Activated T-helper 1 cell treated with anti-CD3 and anti-CD28 coated beads, Interleukin-12 subunit alpha, Interleukin-12 subunit beta, Interleukin-2, Interleukin-4 antibody, amounts not matched to agents 30 ng/mL and 10 ng/mL and 1 ng/mL, durations not matched to agents 14 hours and 24 hours and 36 hours (primary cell): ENCODE measurements at regions of chr16 and their contacts with region 1.

Region 1: GRCh38 chr16:53892155-53892554 is 188.2 kb downstream of the FTO start:
- DNase-seq: peak; percentile 39
- H3K4me3 Mint-ChIP-seq: no peak overlapping the region
- H3K27ac Mint-ChIP-seq: peak overlapping the region; percentile 11
- H3K4me1 Mint-ChIP-seq: peaks cover 38% of the 10 kb centered on the region
- H3K27me3 Mint-ChIP-seq: no peaks in the 10 kb centered on the region

Region 2: DNA sequence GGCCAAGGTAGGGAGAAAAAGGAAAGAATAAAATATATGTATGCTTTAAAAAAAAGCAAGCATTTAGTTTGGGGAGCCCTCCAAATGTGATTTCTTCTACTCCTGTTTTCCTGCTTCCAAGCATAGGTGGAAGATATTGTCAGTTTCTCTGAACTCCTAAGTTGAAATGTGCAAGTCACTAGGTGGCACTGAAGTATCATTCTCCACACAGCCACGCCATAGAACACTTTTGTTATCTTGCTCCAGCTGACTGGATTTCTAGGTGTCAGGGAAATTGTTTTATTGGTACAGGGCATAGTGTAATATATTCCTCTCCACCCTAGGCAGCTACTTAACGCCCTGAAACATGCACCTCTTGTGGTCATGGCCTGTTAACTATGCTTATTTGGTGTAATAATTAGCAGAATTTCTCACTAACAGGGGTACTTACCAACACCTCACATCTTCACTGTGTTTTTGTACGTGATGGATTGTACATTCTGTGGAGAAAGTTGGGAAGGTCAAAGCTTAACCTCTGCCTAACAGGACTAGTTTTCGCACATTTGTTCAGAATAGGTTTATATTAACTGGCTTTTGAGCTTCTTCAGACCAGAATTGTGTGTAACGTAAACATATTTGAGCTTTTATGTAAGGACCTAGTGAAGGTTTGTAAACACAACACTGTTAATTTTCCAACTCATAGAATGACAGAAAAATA is 118.9 kb before region 1 on chr16:
- intact Hi-C with region 1: loop called (anchors 2 kb)
- DNase-seq: no peak
- H3K4me3 Mint-ChIP-seq: no peak overlapping the region
- H3K27ac Mint-ChIP-seq: no peak overlapping the region
- H3K4me1 Mint-ChIP-seq: peaks cover 27% of the 10 kb centered on the region
- H3K27me3 Mint-ChIP-seq: no peaks in the 10 kb centered on the region

Region 3: DNA sequence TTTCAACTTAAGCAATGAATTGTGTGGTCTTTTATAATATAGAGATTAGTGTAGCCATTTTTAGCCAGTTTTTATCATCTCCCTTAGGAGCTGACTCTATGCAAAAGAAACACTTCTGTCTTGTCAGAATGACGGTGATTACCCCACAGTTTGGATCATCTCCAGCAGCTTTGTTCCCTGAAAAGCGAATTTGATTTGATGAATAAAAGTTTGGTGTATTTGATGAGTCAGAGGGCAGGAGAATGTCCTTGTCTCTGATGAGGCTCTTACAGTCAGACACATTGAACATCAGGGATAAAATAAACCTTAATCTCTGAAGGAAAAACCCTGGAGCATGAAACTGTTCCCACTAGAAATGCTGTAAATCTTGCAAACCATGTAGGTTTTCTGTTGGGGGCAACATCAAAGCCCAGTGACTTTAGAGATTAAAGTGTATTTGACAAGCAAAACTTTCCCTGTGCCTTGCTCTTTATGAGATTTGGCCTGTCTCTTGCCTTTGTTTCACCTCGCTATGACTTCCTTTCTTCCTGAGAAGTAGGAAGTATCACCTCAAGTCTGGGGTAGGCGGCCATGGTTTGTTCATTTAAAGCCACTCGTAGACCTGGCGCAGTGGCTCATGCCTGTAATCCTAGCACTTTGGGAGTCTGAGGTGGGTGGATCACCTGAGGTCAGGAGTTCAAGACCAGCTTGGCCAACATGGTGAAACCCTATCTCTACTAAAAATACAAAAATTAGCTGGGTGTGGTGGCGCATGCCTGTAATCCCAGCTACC is 21.1 kb after region 1 on chr16:
- intact Hi-C with region 1: loop called (anchors 2 kb)
- DNase-seq: peak; percentile 4
- H3K4me3 Mint-ChIP-seq: peak overlapping the region; percentile 46
- H3K27ac Mint-ChIP-seq: peak overlapping the region; percentile 82
- H3K4me1 Mint-ChIP-seq: peaks cover 8% of the 10 kb centered on the region
- H3K27me3 Mint-ChIP-seq: no peaks in the 10 kb centered on the region

Region 4: GRCh38 chr16:53945996-53946395 is 53.8 kb after region 1 on chr16:
- intact Hi-C with region 1: loop called (anchors 1 kb)
- DNase-seq: no peak
- H3K4me3 Mint-ChIP-seq: no peak overlapping the region
- H3K27ac Mint-ChIP-seq: no peak overlapping the region
- H3K4me1 Mint-ChIP-seq: peaks cover 43% of the 10 kb centered on the region
- H3K27me3 Mint-ChIP-seq: no peaks in the 10 kb centered on the region

Region 5: DNA sequence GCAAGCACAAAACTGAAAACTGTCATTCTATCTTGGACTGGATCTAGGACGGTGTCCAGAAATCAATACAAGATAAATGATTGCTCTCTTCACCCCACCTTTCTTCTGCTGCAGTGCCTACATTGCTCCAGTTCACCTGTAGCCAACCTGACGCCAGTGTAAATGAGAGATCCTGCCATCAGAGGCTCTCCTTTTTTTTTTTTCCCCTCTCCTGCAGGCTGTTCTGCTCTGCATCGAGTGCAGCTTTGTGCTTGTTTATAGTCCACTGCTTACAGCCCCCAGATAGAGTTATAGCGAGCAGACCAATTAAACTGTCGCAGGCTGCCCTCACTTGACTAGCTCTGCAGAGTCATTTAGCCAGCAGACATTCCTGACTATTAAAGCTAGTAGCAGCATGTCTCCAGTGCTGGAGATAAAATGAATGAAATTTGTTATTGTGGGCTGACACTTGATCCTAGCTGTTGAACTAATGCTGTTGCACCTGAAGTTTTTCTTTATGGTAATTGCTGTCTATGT is 68.9 kb after region 1 on chr16:
- intact Hi-C with region 1: no loop called
- DNase-seq: no peak
- H3K4me3 Mint-ChIP-seq: no peak overlapping the region
- H3K27ac Mint-ChIP-seq: peak overlapping the region; percentile 26
- H3K4me1 Mint-ChIP-seq: peaks cover 20% of the 10 kb centered on the region
- H3K27me3 Mint-ChIP-seq: no peaks in the 10 kb centered on the region

Region 6: GRCh38 chr16:54006693-54007092 is 114.5 kb after region 1 on chr16:
- intact Hi-C with region 1: no loop called
- DNase-seq: no peak
- H3K4me3 Mint-ChIP-seq: no peak overlapping the region
- H3K27ac Mint-ChIP-seq: no peak overlapping the region
- H3K4me1 Mint-ChIP-seq: no peaks in the 10 kb centered on the region
- H3K27me3 Mint-ChIP-seq: no peaks in the 10 kb centered on the region

Region 7: GRCh38 chr16:54422569-54422978 is 530.4 kb after region 1 on chr16:
- intact Hi-C with region 1: loop called (anchors 10 kb)
- DNase-seq: no peak
- H3K4me3 Mint-ChIP-seq: no peak overlapping the region
- H3K27ac Mint-ChIP-seq: no peak overlapping the region
- H3K4me1 Mint-ChIP-seq: no peaks in the 10 kb centered on the region
- H3K27me3 Mint-ChIP-seq: peaks cover 2% of the 10 kb centered on the region

Region 8: DNA sequence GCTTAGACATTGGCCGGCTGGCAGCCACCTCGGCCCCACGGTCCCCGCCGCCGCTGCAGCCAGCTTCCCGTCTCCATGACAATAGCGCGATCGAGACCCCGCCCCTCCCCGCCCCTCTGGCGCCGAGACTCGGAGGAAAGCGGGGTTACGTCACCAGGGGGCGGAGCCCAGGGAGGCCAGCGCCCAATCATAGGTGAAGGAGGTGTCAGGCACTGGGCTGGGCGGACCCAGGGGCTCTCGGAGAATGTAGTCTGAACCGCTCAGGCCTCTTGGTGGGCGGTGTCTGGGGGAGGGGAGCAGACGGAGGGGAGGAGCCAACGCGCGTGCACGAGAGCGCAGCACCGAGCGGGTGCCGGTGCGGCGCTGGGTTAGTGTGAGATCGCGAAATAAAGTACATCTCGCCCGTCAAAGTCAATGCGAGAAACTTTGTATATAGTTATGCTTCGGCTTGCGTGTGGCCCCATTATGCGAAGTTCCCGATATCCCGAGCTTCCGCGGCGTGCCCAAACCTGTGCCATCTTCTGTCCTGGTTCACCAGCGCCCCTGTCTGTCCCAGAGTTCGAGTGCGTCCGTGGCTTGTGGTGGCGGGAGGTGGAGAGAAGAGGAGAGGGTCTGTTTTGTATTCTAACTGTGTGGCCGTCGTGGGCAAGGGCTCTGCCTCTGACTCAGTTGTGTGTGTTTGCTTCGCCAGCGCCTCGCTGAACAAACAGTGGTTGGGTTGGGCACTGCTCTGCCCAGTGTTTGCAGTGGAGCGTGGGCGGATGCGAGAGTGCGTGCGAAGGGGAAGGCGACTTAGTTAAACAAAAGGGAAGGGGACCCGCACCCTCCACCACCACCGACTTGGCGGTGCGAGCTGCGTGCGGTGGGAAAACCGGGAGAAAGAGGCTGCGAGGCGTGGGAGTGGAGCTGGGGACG is 1037.2 kb after region 1 on chr16:
- intact Hi-C with region 1: loop called (anchors 2 kb)
- DNase-seq: peak; percentile 89
- H3K4me3 Mint-ChIP-seq: peak overlapping the region; percentile 88
- H3K27ac Mint-ChIP-seq: peak overlapping the region; percentile 88
- H3K4me1 Mint-ChIP-seq: peaks cover 21% of the 10 kb centered on the region
- H3K27me3 Mint-ChIP-seq: peaks cover 68% of the 10 kb centered on the region

Region 9: GRCh38 chr16:55257966-55258613 is 1365.9 kb after region 1 on chr16:
- intact Hi-C with region 1: loop called (anchors 5 kb)
- DNase-seq: peak; percentile 9
- H3K4me3 Mint-ChIP-seq: no peak overlapping the region
- H3K27ac Mint-ChIP-seq: no peak overlapping the region
- H3K4me1 Mint-ChIP-seq: no peaks in the 10 kb centered on the region
- H3K27me3 Mint-ChIP-seq: no peaks in the 10 kb centered on the region